ENCODE measurements at regions of chr3 and their contacts with region 1.

Region 1: GRCh38 chr3:4493014-4493940 is at the start of gene ITPR1:
- DNase-seq: peak; percentile 100
- H3K4me3 Mint-ChIP-seq: peak within 1 kb of the TSS; percentile 91
- H3K27ac Mint-ChIP-seq: peak within 1 kb of the TSS; percentile 93
- H3K4me1 Mint-ChIP-seq: peaks cover 40% of the 10 kb centered on the region
- H3K27me3 Mint-ChIP-seq: peaks cover 27% of the 10 kb centered on the region
- total RNA-seq, gene ITPR1: 42.3 to 44.7 TPM

Region 2: GRCh38 chr3:4474683-4475490 is 18.4 kb before region 1 on chr3:
- CTCF ChIA-PET with region 1: interaction called, 11 read pairs
- POLR2A ChIA-PET with region 1: no interaction called
- DNase-seq: no peak
- H3K4me3 Mint-ChIP-seq: no peak overlapping the region
- H3K27ac Mint-ChIP-seq: no peak overlapping the region
- H3K4me1 Mint-ChIP-seq: peaks cover 11% of the 10 kb centered on the region
- H3K27me3 Mint-ChIP-seq: peaks cover 17% of the 10 kb centered on the region

Region 3: GRCh38 chr3:4517643-4518311 is 24.5 kb after region 1 on chr3:
- CTCF ChIA-PET with region 1: interaction called, 12 read pairs
- POLR2A ChIA-PET with region 1: interaction called, 4 read pairs
- DNase-seq: no peak
- H3K4me3 Mint-ChIP-seq: no peak overlapping the region
- H3K27ac Mint-ChIP-seq: peak overlapping the region; percentile 64
- H3K4me1 Mint-ChIP-seq: peaks cover 32% of the 10 kb centered on the region
- H3K27me3 Mint-ChIP-seq: no peaks in the 10 kb centered on the region